ENCODE measurements at regions of chr1 and their contacts with region 1.

Region 1: GRCh38 chr1:107963601-107964335 is 1.2 kb downstream of the VAV3 start:
- DNase-seq: peak; percentile 87
- ATAC-seq: peak; percentile 53
- H3K4me3 ChIP-seq: peak overlapping the region; percentile 86 to 98 (median 90)
- H3K4me3 Mint-ChIP-seq: peak overlapping the region; percentile 98
- H3K27ac ChIP-seq: peak overlapping the region; percentile 93 to 96
- H3K27ac Mint-ChIP-seq: peak overlapping the region; percentile 99
- H3K4me1 ChIP-seq: peaks cover 36 to 42% of the 10 kb centered on the region in 2 donors
- H3K4me1 Mint-ChIP-seq: peaks cover 51% of the 10 kb centered on the region
- H3K27me3 ChIP-seq: no peaks in the 10 kb centered on the region
- H3K27me3 Mint-ChIP-seq: no peaks in the 10 kb centered on the region
- CTCF ChIP-seq: no peak

Region 2: GRCh38 chr1:107795994-107796393 is 167.8 kb before region 1 on chr1:
- CTCF ChIA-PET with region 1: interaction called, 11 read pairs
- POLR2A ChIA-PET with region 1: interaction called, 3 read pairs
- intact Hi-C with region 1: loop called (anchors 5 kb)
- DNase-seq: peak; percentile 40
- ATAC-seq: peak; percentile 40
- H3K4me3 ChIP-seq: peak overlapping the region in 1 of 5 experiments; percentile 18
- H3K4me3 Mint-ChIP-seq: peak overlapping the region; percentile 62
- H3K27ac ChIP-seq: peak overlapping the region; percentile 61 to 88
- H3K27ac Mint-ChIP-seq: peak overlapping the region; percentile 42
- H3K4me1 ChIP-seq: peaks cover 68 to 84% of the 10 kb centered on the region in 2 donors
- H3K4me1 Mint-ChIP-seq: peaks cover 76% of the 10 kb centered on the region
- H3K27me3 ChIP-seq: no peaks in the 10 kb centered on the region
- H3K27me3 Mint-ChIP-seq: no peaks in the 10 kb centered on the region
- CTCF ChIP-seq: no peak

Region 3: DNA sequence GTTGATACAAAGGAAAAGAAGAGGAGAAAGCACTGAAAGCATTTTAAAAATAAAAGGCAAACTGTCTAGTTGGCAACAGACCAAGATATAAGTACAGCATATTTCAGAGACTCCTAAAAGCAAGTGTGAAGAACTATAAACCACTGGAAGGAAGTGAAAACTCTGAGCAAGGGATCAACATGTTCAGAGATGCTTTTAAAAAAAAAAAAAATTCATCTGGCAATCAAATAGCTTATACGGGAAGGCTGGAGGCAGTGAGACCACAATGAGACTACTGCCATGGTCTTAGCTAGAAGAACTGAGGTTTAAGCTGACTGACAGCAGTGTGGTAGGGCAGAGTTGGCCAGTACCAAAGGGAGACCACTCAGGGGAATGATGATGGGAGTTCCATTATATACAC is 123.0 kb before region 1 on chr1:
- CTCF ChIA-PET with region 1: interaction called, 4 read pairs
- POLR2A ChIA-PET with region 1: interaction called, 5 read pairs
- intact Hi-C with region 1: loop called (anchors 10 kb)
- DNase-seq: peak; percentile 50
- ATAC-seq: peak; percentile 50
- H3K4me3 ChIP-seq: peak overlapping the region in 2 of 5 experiments; percentile 22 to 45
- H3K4me3 Mint-ChIP-seq: peak overlapping the region; percentile 76
- H3K27ac ChIP-seq: peak overlapping the region; percentile 43 to 64
- H3K27ac Mint-ChIP-seq: peak overlapping the region; percentile 85
- H3K4me1 ChIP-seq: peaks cover 78 to 93% of the 10 kb centered on the region in 2 donors
- H3K4me1 Mint-ChIP-seq: peaks cover 92% of the 10 kb centered on the region
- H3K27me3 ChIP-seq: no peaks in the 10 kb centered on the region
- H3K27me3 Mint-ChIP-seq: no peaks in the 10 kb centered on the region
- CTCF ChIP-seq: no peak

Region 4: GRCh38 chr1:107926436-107927080 is 37.2 kb before region 1 on chr1:
- CTCF ChIA-PET with region 1: no interaction called
- POLR2A ChIA-PET with region 1: interaction called, 3 read pairs
- intact Hi-C with region 1: loop called (anchors 5 kb)
- DNase-seq: no peak
- ATAC-seq: no peak
- H3K4me3 ChIP-seq: no peak overlapping the region
- H3K4me3 Mint-ChIP-seq: no peak overlapping the region
- H3K27ac ChIP-seq: no peak overlapping the region
- H3K27ac Mint-ChIP-seq: peak overlapping the region; percentile 27
- H3K4me1 ChIP-seq: peaks cover 19 to 41% of the 10 kb centered on the region in 2 donors
- H3K4me1 Mint-ChIP-seq: peaks cover 61% of the 10 kb centered on the region
- H3K27me3 ChIP-seq: no peaks in the 10 kb centered on the region
- H3K27me3 Mint-ChIP-seq: no peaks in the 10 kb centered on the region
- CTCF ChIP-seq: no peak

Region 5: GRCh38 chr1:107949467-107950253 is 14.1 kb before region 1 on chr1:
- CTCF ChIA-PET with region 1: interaction called, 11 read pairs
- POLR2A ChIA-PET with region 1: interaction called, 3 read pairs
- intact Hi-C with region 1: loop called (anchors 2 kb)
- DNase-seq: no peak
- ATAC-seq: no peak
- H3K4me3 ChIP-seq: no peak overlapping the region
- H3K4me3 Mint-ChIP-seq: peak overlapping the region; percentile 2
- H3K27ac ChIP-seq: peak overlapping the region in 1 of 2 donors; percentile 44
- H3K27ac Mint-ChIP-seq: peak overlapping the region; percentile 70
- H3K4me1 ChIP-seq: peaks cover 44 to 75% of the 10 kb centered on the region in 2 donors
- H3K4me1 Mint-ChIP-seq: peaks cover 75% of the 10 kb centered on the region
- H3K27me3 ChIP-seq: no peaks in the 10 kb centered on the region
- H3K27me3 Mint-ChIP-seq: no peaks in the 10 kb centered on the region
- CTCF ChIP-seq: no peak

Region 6: GRCh38 chr1:108009603-108010195 is 45.9 kb after region 1 on chr1:
- CTCF ChIA-PET with region 1: no interaction called
- POLR2A ChIA-PET with region 1: no interaction called
- intact Hi-C with region 1: no loop called
- DNase-seq: no peak
- ATAC-seq: no peak
- H3K4me3 ChIP-seq: no peak overlapping the region
- H3K4me3 Mint-ChIP-seq: no peak overlapping the region
- H3K27ac ChIP-seq: no peak overlapping the region
- H3K27ac Mint-ChIP-seq: no peak overlapping the region
- H3K4me1 ChIP-seq: peaks cover 20 to 21% of the 10 kb centered on the region in 2 donors
- H3K4me1 Mint-ChIP-seq: peaks cover 30% of the 10 kb centered on the region
- H3K27me3 ChIP-seq: no peaks in the 10 kb centered on the region
- H3K27me3 Mint-ChIP-seq: no peaks in the 10 kb centered on the region
- CTCF ChIP-seq: no peak

Region 7: GRCh38 chr1:108041360-108042142 is 77.8 kb after region 1 on chr1:
- CTCF ChIA-PET with region 1: interaction called, 4 read pairs
- POLR2A ChIA-PET with region 1: no interaction called
- intact Hi-C with region 1: loop called (anchors 2 kb)
- DNase-seq: peak; percentile 68
- ATAC-seq: peak; percentile 60
- H3K4me3 ChIP-seq: peak overlapping the region in 1 of 5 experiments; percentile 25
- H3K4me3 Mint-ChIP-seq: peak overlapping the region; percentile 67
- H3K27ac ChIP-seq: peak overlapping the region; percentile 61 to 80
- H3K27ac Mint-ChIP-seq: peak overlapping the region; percentile 79
- H3K4me1 ChIP-seq: peaks cover 34 to 37% of the 10 kb centered on the region in 2 donors
- H3K4me1 Mint-ChIP-seq: peaks cover 38% of the 10 kb centered on the region
- H3K27me3 ChIP-seq: no peaks in the 10 kb centered on the region
- H3K27me3 Mint-ChIP-seq: no peaks in the 10 kb centered on the region
- CTCF ChIP-seq: no peak

Region 8: GRCh38 chr1:108125312-108126138 is 161.8 kb after region 1 on chr1:
- CTCF ChIA-PET with region 1: interaction called, 57 read pairs
- POLR2A ChIA-PET with region 1: interaction called, 4 read pairs
- intact Hi-C with region 1: loop called (anchors 1 kb)
- DNase-seq: peak; percentile 85
- ATAC-seq: peak; percentile 92
- H3K4me3 ChIP-seq: no peak overlapping the region
- H3K4me3 Mint-ChIP-seq: no peak overlapping the region
- H3K27ac ChIP-seq: no peak overlapping the region
- H3K27ac Mint-ChIP-seq: no peak overlapping the region
- H3K4me1 ChIP-seq: peaks cover 5 to 8% of the 10 kb centered on the region in 2 donors
- H3K4me1 Mint-ChIP-seq: peaks cover 4% of the 10 kb centered on the region
- H3K27me3 ChIP-seq: no peaks in the 10 kb centered on the region
- H3K27me3 Mint-ChIP-seq: peaks cover under 1% of the 10 kb centered on the region
- CTCF ChIP-seq: peak; percentile 96

Measured in B cell (primary cell).